Dorsolateral prefrontal cortex (tissue), 120 donors: ENCODE measurements at regions of chr9 and their contacts with region 1.

Region 1: DNA sequence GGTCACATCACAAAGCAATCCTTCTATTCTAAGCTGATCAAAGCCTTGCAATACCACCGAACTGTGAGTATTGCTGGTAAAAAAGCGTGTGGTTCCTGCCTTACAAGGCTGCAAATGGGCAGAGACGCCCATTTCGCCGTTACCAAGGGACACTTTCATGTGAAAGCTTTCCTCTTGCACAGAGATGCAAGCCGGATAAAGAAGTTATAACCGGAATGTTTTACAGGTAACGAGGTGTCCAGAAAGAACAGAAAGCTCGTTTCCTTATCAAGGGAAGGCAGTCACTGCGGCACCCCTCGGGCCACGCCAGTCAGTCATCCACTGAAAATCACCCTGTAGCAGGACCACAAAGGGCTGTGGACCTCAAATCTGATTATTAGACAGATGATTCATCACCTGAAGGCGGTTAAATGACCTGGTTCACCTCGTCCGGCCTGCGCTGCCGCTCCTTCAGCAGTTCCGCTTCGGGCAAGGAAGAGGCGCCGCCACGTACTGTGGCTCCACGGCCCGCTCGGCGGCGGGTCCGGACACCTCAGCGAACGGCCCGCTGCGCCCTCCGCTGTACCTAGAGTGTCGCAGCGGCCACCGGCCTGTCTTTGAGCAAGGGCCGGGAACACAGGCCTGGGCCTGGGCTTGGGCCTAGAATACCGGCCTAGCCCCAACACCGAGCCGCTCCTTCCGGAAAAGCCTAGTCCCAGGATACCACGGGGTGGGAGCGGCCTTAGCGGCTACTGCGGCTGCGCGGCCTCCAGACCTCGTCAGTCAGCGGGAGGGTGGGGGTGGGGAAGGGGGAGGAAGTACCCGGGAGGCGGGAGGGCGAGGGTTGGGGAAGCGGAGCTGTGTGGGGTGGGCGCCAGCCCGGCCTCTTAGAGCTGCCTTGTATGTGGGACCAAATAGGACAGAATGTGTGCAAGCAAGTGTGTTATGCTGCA is at the start of gene KLHL9:
- DNase-seq: peak; percentile 86 to 94 (median 90)
- H3K4me3 ChIP-seq: peak within 1 kb of the TSS; percentile 61 to 98 (median 89)
- H3K27ac ChIP-seq: peak within 1 kb of the TSS; percentile 73 to 98 (median 93)
- H3K27me3 ChIP-seq: no peaks in the 10 kb centered on the region
- CTCF ChIP-seq: peak in 24 of 56 donors; percentile 4 to 46 (median 21)
- total RNA-seq, gene KLHL9: 15.6 to 29.5 (median 24.9) TPM

Region 2: DNA sequence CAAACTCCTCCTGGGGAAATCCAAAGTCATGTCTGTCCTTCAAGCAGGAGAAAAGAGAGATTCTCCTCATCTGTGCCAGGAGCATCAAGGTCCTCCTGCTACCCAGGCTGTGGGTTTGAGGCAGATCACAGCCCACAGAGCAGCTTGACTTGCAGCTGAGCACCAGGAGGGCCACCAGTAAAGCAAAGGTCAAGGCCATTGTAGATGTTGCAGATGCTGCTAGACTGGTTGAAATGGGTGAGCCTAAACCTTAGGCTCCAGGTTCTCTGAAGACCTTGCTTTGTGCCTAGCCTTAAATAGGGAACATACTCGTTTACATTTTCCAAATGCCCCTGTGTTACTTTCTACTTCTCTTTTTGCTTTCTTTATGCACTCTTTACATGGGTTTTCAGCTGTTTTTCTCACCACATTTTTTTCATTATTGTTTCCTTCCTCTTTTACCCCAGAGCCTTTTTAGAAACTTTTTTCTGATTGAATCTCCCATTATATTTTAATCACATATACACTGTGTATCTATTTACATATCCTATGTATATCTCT is 50.2 kb after region 1 on chr9 and contains the start of gene IFNA2:
- intact Hi-C with region 1: no loop called
- DNase-seq: no peak
- H3K4me3 ChIP-seq: no peak within 1 kb of the TSS
- H3K27ac ChIP-seq: no peak within 1 kb of the TSS
- H3K27me3 ChIP-seq: peaks cover 0 to 24% (median 3%) of the 10 kb centered on the region in 45 donors
- CTCF ChIP-seq: no peak
- total RNA-seq, gene IFNA2: 0.36 to 3.6 (median 1.3) TPM in 105 of 120 experiments, not detected in the others

Region 3: GRCh38 chr9:21395778-21396717 is 61.1 kb after region 1 on chr9:
- intact Hi-C with region 1: loop called in 1 of 2 experiments (anchors 5 kb)
- DNase-seq: peak; percentile 51 to 77 (median 68)
- H3K4me3 ChIP-seq: peak overlapping the region; percentile 39 to 77 (median 65)
- H3K27ac ChIP-seq: peak overlapping the region in 4 of 59 donors; percentile 11 to 48 (median 20)
- H3K27me3 ChIP-seq: peaks cover 0 to 60% (median 10%) of the 10 kb centered on the region in 45 donors
- CTCF ChIP-seq: peak; percentile 48 to 91 (median 80)

Region 4: GRCh38 chr9:21402386-21403251 is 67.7 kb after region 1 on chr9:
- intact Hi-C with region 1: loop called (anchors 2 to 5 kb)
- DNase-seq: peak in 9 of 10 donors; percentile 27 to 62 (median 40)
- H3K4me3 ChIP-seq: peak overlapping the region; percentile 34 to 83 (median 60)
- H3K27ac ChIP-seq: peak overlapping the region in 55 of 59 donors; percentile 13 to 89 (median 65)
- H3K27me3 ChIP-seq: peaks cover 0 to 36% (median 11%) of the 10 kb centered on the region in 45 donors
- CTCF ChIP-seq: peak in 12 of 56 donors; percentile 4 to 41 (median 23)

Region 5: GRCh38 chr9:21802195-21803000 is 467.4 kb after region 1 on chr9 and contains the start of gene MTAP:
- intact Hi-C with region 1: loop called in 1 of 2 experiments (anchors 5 kb)
- DNase-seq: peak; percentile 76 to 95 (median 92)
- H3K4me3 ChIP-seq: peak within 1 kb of the TSS; percentile 56 to 94 (median 82)
- H3K27ac ChIP-seq: peak within 1 kb of the TSS; percentile 57 to 96 (median 91)
- H3K27me3 ChIP-seq: no peaks in the 10 kb centered on the region
- CTCF ChIP-seq: peak in 13 of 56 donors; percentile 4 to 43 (median 21)
- total RNA-seq, gene MTAP: 15.1 to 48.5 (median 26.3) TPM